CD8-positive, alpha-beta T cell (primary cell): ENCODE measurements at regions of chr16 and their contacts with region 1.

Region 1: DNA sequence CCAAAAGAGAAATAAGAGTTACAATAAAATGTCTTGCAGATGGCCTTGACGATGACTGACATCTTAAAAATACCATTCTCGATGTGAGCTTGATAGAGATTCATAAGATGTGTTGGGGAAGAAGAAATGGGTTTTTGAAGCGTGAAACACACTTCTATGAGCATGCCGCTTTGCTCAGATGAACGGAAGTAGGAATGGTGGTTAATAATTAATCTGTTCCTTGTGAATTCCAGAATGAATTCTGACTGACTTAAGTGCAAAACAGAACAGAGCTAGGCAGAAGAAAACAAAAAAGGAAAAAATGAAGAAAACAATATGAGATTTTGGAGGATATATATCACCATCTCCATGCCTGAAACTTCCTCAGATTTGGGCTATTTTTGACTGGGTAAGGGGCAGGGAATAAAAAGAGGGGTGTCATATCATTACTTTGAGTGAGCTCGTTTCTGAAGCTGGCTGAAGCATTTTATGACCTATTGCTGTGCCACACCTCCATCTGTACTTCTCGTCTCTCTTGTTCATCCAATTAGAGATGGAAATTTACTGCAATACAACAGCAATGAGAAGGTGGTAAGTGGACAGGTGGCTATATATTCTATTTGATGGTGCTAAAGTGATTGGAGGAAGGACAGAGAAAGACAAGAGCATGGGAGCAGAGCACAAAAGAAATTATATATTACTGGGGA is 1152.0 kb upstream of the CDH8 start:
- DNase-seq: no peak
- ATAC-seq: no peak
- H3K4me3 ChIP-seq: no peak overlapping the region
- H3K4me3 Mint-ChIP-seq: no peak overlapping the region
- H3K27ac ChIP-seq: no peak overlapping the region
- H3K27ac Mint-ChIP-seq: no peak overlapping the region
- H3K4me1 ChIP-seq: no peaks in the 10 kb centered on the region
- H3K4me1 Mint-ChIP-seq: no peaks in the 10 kb centered on the region
- H3K27me3 ChIP-seq: no peaks in the 10 kb centered on the region
- H3K27me3 Mint-ChIP-seq: no peaks in the 10 kb centered on the region
- CTCF ChIP-seq: no peak

Region 2: DNA sequence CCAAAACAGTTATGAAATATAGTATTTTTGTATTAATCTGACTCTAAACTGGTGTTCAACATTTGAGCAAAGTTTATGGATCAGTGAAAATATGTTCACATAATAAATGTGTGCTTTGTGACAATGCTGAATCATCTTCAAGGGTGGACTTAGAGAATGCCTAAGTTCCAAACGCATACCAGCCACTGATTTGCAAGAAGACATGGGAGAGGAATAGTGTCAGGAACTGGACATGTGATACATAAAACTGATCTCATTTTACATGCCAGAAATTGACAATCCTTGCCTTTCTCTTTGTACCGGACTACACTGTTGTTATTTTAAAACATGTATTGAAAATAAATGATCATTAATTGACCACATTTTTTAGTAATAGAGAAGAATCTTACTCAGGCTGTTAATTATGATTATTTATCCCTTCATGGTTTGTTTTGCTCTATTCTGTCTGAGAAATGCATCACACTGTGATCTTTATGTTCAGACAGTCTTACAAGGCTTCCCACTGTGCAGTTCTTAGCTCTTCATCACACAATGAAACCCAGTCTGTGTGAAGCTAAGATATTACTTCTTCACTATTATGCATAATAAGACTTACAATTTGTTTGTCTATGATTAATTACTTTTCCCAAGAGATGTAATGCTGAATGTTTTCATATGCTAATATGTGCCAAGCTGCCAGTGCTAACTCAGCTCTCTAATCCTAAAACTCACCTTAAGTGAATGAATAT is 28.6 kb after region 1 on chr16:
- CTCF ChIA-PET with region 1: no interaction called
- POLR2A ChIA-PET with region 1: no interaction called
- intact Hi-C with region 1: loop called in 1 of 2 experiments (anchors 1 kb)
- DNase-seq: no peak
- ATAC-seq: no peak
- H3K4me3 ChIP-seq: no peak overlapping the region
- H3K4me3 Mint-ChIP-seq: no peak overlapping the region
- H3K27ac ChIP-seq: no peak overlapping the region
- H3K27ac Mint-ChIP-seq: no peak overlapping the region
- H3K4me1 ChIP-seq: no peaks in the 10 kb centered on the region
- H3K4me1 Mint-ChIP-seq: no peaks in the 10 kb centered on the region
- H3K27me3 ChIP-seq: no peaks in the 10 kb centered on the region
- H3K27me3 Mint-ChIP-seq: no peaks in the 10 kb centered on the region
- CTCF ChIP-seq: no peak